Breast epithelium (tissue), 4 donors: ENCODE measurements at regions of chr2 and their contacts with region 1.

Region 1: GRCh38 chr2:122210898-122211856 is 455.7 kb downstream of the TSN start:
- DNase-seq: no peak
- H3K4me3 ChIP-seq: no peak overlapping the region
- H3K27ac ChIP-seq: no peak overlapping the region
- H3K4me1 ChIP-seq: no peaks in the 10 kb centered on the region
- H3K27me3 ChIP-seq: no peaks in the 10 kb centered on the region
- CTCF ChIP-seq: no peak
- POLR2A ChIP-seq: no peak

Region 2: DNA sequence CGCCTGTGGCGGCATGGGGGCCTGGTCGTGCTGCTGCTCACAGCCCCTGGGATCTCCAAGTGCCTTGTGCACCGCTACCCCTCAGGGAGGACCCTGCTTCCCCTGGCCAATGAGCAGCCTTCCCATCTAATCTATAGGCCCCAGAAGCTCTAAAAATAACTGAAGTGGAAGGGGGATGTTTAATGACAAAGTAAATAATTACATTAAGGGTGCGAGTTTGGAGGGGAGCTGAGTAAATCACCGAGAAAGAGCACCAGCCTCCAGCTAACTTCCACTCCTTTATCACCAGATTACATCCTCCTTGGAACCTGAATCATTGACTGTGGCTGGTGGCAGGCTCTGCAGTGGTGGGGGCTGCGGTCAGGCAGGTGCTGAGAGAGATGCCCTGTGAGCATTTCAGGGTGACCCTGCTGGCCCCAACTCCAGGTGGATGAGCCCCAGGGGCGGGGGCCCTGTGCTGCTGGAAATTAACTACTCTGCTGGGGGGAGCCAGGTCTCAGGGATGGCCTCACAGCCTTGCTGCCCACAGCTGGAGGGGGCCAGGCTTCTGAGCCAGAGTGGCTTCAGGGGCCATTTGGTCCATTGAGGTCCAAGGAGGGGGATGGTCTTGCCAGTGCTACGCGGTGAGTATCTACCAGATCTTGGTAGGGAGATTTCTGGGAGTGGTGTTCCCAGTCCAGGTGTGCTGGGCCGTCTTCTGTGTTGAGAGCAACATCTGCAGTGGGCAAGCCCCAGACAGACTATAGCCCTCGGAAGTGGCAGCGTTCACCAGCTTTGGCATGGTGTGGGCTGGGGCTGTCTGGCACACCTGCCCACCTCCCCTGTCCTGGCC is 1401.4 kb before region 1 on chr2:
- intact Hi-C with region 1: loop called (anchors 5 kb)
- DNase-seq: no peak
- H3K4me3 ChIP-seq: no peak overlapping the region
- H3K27ac ChIP-seq: no peak overlapping the region
- H3K4me1 ChIP-seq: no peaks in the 10 kb centered on the region
- H3K27me3 ChIP-seq: no peaks in the 10 kb centered on the region
- CTCF ChIP-seq: no peak
- POLR2A ChIP-seq: no peak

Region 3: DNA sequence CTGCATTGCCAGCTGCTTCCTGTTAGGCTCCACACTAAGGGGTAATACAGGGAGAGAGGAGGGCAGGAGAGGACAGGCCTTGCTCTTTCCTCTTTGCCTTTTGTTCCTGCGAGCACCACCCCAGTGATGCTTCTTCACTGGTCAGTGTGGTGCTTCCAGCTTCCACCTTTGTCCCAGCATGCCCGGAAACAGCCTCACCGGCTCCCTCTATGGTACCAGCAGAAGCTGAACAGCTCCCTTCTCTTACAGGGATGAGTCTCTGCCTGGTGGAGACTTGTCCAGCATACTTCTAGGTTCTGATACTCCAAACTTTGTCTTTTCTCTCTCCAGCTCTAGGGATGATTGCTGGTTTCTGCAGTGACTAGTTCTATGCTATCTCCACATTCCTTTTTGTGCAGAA is 42.4 kb before region 1 on chr2:
- intact Hi-C with region 1: no loop called
- DNase-seq: no peak
- H3K4me3 ChIP-seq: no peak overlapping the region
- H3K27ac ChIP-seq: no peak overlapping the region
- H3K4me1 ChIP-seq: no peaks in the 10 kb centered on the region
- H3K27me3 ChIP-seq: peaks cover 0 to 5% of the 10 kb centered on the region in 2 donors
- CTCF ChIP-seq: no peak
- POLR2A ChIP-seq: no peak

Region 4: GRCh38 chr2:122500316-122501105 is 289.3 kb after region 1 on chr2:
- intact Hi-C with region 1: no loop called
- DNase-seq: no peak
- H3K4me3 ChIP-seq: no peak overlapping the region
- H3K27ac ChIP-seq: no peak overlapping the region
- H3K4me1 ChIP-seq: no peaks in the 10 kb centered on the region
- H3K27me3 ChIP-seq: no peaks in the 10 kb centered on the region
- CTCF ChIP-seq: no peak
- POLR2A ChIP-seq: no peak